Ascending aorta (tissue), 2 donors: ENCODE measurements at regions of chr16 and their contacts with region 1.

Region 1: DNA sequence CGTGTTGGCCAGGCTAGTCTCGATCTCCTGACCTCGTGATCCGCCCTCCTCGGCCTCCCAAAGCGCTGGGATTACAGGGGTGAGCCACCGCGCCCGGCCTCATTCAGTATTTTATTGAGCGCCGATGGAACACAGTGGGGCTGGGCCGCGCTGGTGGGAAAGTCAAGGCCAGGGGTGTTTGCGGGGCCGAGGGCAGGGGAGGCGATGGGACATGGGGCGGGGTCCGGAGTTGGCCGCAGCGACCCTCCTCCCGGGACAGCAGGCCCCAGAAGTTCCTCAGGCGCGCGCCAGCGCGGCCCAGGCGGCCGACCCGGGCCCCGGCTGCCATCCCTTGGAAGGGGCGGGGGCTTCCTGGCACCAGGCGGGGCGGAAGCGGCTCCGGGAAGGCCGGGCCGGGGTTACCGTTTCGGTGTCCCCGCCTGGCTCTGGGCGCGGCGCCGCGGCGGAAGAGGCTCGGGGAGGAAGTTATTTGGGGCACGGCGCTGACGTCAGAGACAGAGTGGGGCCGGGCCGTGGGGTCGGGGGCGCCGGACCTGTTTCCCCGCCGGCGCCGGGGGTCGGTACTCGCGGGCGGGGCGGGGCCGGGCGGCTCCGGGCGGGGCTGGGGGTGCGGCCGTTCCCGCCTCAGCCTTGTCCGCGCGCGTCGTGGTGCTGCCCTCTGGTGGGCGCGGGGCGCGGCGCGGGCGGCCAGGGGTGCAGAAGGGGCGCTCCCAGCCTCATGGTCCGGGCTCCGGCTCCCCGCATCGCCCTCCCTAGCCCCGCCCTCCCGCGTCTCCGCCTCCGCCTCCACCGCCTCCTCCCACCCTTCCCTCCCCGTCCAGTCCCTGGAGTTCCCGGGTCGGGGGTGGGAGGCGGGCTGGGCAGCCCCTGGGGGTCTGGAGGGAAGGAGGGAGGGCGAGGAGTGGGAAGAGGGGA is 952 bp upstream of the PRSS27 start:
- DNase-seq: peak; percentile 20 to 91
- H3K4me3 ChIP-seq: peak overlapping the region; percentile 79 to 80
- H3K27ac ChIP-seq: peak overlapping the region; percentile 57 to 75
- H3K4me1 ChIP-seq: peaks cover 0 to 8% of the 10 kb centered on the region in 2 donors
- H3K27me3 ChIP-seq: no peaks in the 10 kb centered on the region
- CTCF ChIP-seq: peak; percentile 54 to 67 (median 56)

Region 2: GRCh38 chr16:2682209-2683021 is 38.6 kb before region 1 on chr16 and contains the start of gene KCTD5:
- intact Hi-C with region 1: loop called (anchors 2 kb)
- DNase-seq: peak; percentile 76 to 98
- H3K4me3 ChIP-seq: peak within 1 kb of the TSS; percentile 89 to 93
- H3K27ac ChIP-seq: peak within 1 kb of the TSS; percentile 54 to 69
- H3K4me1 ChIP-seq: peaks cover 7 to 19% of the 10 kb centered on the region in 2 donors
- H3K27me3 ChIP-seq: no peaks in the 10 kb centered on the region
- CTCF ChIP-seq: no peak
- total RNA-seq, gene KCTD5: 10.5 TPM

Region 3: DNA sequence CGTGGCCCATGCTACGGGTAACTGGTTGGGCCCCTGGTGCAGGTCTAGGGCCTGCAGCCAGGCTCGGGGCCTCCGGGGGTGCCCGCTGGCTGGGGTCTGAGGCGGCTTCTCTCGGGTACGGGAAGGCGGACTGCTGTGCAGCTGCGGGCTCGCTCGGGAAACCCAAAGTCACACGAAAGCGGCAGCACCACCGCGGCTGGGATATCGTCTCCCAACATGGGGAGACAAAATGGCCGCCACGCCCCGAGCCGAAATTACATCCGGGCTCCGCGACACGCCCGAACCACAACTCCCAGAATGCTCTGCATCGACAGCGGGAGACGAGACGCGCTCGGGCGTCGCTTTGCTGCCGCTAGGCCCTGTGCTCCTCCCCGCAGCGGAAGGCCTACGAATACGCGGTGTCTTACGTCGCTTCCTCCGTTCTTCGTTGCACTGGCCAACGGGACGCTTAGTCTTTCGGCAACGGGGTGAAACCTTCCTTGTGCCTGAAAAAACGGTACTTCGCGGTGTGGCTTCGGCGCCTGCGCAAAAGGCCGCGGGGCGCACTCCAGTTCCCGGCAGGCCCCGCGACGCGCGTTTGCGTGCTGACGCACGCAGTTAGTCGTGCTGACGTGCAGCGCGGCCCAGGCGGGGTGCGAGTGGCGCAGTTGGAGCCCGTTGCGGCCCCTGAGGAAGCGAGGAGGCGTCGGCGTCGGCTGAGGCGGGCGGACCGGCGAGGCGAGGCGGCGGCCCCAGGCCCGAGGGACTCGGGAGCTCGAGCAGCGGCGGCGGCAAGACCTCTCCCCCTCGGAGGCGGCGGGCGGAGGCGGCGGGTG is 31.3 kb after region 1 on chr16 and contains the start of gene SRRM2:
- intact Hi-C with region 1: loop called (anchors 1 kb)
- DNase-seq: peak; percentile 67 to 97
- H3K4me3 ChIP-seq: peak within 1 kb of the TSS; percentile 86 to 96
- H3K27ac ChIP-seq: peak within 1 kb of the TSS; percentile 97 to 98
- H3K4me1 ChIP-seq: peaks cover 18 to 35% of the 10 kb centered on the region in 2 donors
- H3K27me3 ChIP-seq: no peaks in the 10 kb centered on the region
- CTCF ChIP-seq: no peak
- total RNA-seq, gene SRRM2: 359 TPM